AG04449 (cell line): ENCODE measurements at regions of chr7 and their contacts with region 1.

Region 1: DNA sequence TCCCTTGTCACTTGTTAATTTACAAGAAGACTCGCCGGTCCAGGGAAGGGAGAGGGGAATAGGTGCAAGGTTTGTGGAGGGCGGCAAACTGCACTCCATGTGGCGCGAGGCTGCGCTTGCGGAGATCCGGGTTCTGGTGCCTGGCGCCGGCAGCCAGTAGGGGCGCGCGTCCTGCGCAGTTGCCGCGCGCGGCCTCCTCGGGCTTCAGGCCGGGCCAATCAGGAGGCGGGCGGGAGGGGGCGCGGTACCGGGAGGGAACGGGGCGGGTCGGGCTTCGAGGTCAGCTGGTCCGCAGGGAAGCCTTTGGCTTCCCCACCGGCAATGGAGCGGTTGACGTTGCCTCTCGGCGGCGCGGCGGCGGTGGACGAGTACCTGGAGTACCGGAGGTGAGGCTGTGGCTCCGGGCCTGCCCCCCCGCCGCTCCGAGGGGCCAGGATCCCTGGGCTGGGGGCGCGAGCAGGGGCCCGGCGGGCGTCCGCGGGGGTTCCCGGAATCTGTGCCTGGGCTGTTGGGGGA is at the start of gene FAM221A:
- DNase-seq: no peak
- H3K4me3 ChIP-seq: peak within 1 kb of the TSS; percentile 64
- CTCF ChIP-seq: peak; percentile 91

Region 2: DNA sequence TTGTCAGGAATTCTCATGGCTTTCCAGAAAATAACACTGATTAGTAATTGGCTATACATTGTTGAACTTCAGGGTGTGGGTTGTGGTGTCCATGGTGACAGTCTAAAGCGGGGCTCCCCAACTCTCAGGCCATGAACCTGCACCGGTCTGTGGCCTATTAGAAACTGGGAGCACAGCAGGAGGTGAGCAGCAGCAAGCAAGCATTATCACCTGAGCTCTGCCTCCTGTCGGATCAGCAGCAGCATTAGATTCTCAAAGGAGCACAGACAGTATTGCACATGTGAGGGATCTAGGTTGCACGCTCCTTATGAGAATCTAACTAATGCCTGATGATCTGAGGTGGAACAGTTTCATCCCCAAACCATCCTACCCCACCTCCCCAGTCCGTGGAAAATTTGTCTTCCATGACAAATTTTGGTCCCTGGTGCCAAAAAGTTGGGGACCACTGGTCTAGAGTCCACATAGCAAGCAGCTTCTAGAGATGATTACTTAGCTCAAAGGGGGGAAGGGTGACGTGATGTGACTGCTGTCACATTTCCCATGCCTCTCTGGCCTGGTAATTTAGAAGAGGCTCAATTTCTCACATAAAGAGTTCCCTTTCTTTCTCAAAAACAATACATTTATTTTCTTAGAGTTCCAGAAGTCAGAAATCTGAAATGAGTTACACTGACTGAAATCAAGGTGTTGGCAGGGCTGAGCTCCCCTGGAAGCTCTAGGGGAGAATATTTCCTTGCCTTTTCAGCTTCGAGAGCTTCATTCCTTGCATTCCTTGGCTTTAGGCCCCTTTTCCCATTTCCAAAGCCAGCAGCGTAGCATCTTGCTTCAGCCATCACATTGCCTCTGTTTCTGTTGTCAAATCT is 17.6 kb before region 1 on chr7:
- CTCF ChIA-PET with region 1: interaction called, 14 read pairs
- POLR2A ChIA-PET with region 1: no interaction called
- DNase-seq: no peak
- H3K4me3 ChIP-seq: no peak overlapping the region
- CTCF ChIP-seq: no peak